Activated CD4-positive, alpha-beta memory T cell treated with anti-CD3 and anti-CD28 coated beads for 36 hours (primary cell): ENCODE measurements at regions of chr19 and their contacts with region 1.

Region 1: GRCh38 chr19:14136509-14137281 is at the start of gene ASF1B:
- DNase-seq: peak; percentile 99
- H3K4me3 Mint-ChIP-seq: peak within 1 kb of the TSS; percentile 81
- H3K27ac Mint-ChIP-seq: peak within 1 kb of the TSS; percentile 94
- H3K4me1 Mint-ChIP-seq: peaks cover 33% of the 10 kb centered on the region
- H3K27me3 Mint-ChIP-seq: no peaks in the 10 kb centered on the region
- total RNA-seq, gene ASF1B: 67.7 to 70.8 TPM

Region 2: GRCh38 chr19:14081325-14082093 is 55.2 kb before region 1 on chr19:
- CTCF ChIA-PET with region 1: interaction called, 18 read pairs
- POLR2A ChIA-PET with region 1: interaction called, 7 read pairs
- intact Hi-C with region 1: loop called (anchors 2 kb)
- DNase-seq: peak; percentile 99
- H3K4me3 Mint-ChIP-seq: peak overlapping the region; percentile 84
- H3K27ac Mint-ChIP-seq: peak overlapping the region; percentile 87
- H3K4me1 Mint-ChIP-seq: peaks cover 17% of the 10 kb centered on the region
- H3K27me3 Mint-ChIP-seq: peaks cover 2% of the 10 kb centered on the region

Region 3: DNA sequence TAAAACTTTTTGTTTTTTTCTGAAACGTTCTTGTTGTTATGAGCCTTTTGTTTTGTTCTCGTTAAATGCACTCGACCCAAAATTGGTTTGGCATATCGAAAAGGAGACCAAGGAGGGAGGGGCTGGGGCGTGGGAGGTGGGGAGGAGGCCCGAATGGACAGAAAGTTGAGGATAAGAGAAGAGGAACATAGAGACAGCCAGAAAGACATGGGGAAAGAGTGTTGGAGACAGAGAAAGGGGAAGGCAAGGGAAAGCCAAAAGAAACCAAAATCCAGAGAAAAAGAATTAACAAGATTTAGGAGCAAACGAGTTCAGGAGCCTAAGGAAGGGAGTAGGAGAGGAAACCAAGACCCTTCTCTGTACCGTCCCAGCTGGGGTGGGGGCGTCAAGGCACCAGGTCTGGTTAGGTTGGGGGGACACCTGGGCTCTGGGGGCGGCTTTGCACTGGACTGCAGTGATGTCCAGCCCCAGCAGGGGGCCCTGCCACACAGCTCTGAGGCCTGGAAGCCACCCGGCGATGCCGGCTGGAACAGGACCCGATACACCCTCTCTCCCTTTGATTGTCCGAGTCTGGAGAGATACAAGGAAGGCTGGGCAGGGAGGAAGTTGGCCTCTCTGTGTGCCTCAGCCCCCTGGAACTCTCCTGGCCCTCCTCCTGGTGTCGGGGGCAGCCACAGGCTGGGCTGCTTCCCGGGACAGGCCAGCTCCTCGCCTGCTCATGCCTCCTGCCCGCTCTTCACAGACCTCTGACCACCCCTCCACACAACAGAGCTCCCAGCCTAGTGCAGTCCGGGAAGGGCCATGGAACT is 11.3 kb after region 1 on chr19:
- CTCF ChIA-PET with region 1: interaction called, 30 read pairs
- POLR2A ChIA-PET with region 1: interaction called, 6 read pairs
- intact Hi-C with region 1: no loop called
- DNase-seq: peak; percentile 73
- H3K4me3 Mint-ChIP-seq: no peak overlapping the region
- H3K27ac Mint-ChIP-seq: peak overlapping the region; percentile 92
- H3K4me1 Mint-ChIP-seq: peaks cover 38% of the 10 kb centered on the region
- H3K27me3 Mint-ChIP-seq: no peaks in the 10 kb centered on the region

Region 4: DNA sequence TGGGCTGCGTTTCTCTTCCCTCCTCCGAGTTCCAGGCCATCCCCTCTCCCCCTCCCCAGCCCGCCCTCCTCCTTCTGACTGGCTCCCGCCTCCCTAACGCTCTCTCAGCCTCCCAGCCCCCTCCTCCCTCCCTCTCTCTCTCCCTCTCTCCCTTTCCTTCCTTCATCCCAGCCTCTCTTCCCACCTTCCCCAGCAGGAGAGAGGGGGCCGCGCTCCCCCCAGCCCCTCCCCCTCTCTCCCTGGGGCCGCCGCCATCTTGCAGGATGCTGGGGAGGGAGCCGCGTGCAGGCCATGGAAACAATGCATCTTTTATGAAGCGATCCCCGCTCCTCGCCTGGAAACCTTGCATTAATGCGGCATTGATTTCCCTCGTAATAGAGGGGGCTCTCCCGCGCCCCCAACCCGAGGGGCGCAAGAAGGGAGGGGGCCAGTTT is 111.9 kb after region 1 on chr19:
- CTCF ChIA-PET with region 1: no interaction called
- POLR2A ChIA-PET with region 1: no interaction called
- intact Hi-C with region 1: no loop called
- DNase-seq: peak; percentile 57
- H3K4me3 Mint-ChIP-seq: peak overlapping the region; percentile 50
- H3K27ac Mint-ChIP-seq: peak overlapping the region; percentile 66
- H3K4me1 Mint-ChIP-seq: peaks cover 4% of the 10 kb centered on the region
- H3K27me3 Mint-ChIP-seq: no peaks in the 10 kb centered on the region

Region 5: GRCh38 chr19:14354445-14354844 is 217.8 kb after region 1 on chr19:
- CTCF ChIA-PET with region 1: interaction called, 28 read pairs
- POLR2A ChIA-PET with region 1: no interaction called
- intact Hi-C with region 1: loop called (anchors 5 kb)
- DNase-seq: no peak
- H3K4me3 Mint-ChIP-seq: no peak overlapping the region
- H3K27ac Mint-ChIP-seq: peak overlapping the region; percentile 51
- H3K4me1 Mint-ChIP-seq: peaks cover 31% of the 10 kb centered on the region
- H3K27me3 Mint-ChIP-seq: no peaks in the 10 kb centered on the region

Region 6: DNA sequence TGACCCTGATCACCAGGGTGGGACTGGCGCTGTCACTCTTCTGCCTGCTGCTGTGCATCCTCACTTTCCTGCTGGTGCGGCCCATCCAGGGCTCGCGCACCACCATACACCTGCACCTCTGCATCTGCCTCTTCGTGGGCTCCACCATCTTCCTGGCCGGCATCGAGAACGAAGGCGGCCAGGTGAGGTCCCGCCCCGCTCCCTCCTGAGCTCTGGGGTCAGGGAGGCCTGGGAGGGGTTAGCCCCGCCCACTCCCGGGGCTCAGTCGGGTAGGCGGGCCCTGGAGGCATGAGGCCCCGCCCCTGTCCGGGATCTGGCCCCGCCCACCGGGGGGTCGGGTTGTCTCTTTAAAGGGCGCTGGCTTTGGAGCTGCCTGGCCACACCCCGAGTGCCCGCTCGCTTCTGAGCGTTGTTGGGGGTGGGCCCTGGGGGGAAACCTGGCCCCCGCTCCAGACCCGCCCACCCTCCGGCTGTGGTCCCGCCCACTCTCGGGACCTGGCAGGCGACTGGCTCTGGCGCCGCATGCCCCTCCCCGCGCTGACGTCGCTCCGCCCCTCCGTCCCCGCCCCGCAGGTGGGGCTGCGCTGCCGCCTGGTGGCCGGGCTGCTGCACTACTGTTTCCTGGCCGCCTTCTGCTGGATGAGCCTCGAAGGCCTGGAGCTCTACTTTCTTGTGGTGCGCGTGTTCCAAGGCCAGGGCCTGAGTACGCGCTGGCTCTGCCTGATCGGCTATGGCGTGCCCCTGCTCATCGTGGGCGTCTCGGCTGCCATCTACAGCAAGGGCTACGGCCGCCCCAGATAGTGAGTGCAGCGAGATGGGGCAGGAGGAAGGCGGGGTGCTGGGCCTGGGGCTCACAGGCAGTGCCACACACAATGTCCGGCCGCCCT is 269.3 kb after region 1 on chr19:
- CTCF ChIA-PET with region 1: interaction called, 31 read pairs
- POLR2A ChIA-PET with region 1: no interaction called
- intact Hi-C with region 1: no loop called
- DNase-seq: peak; percentile 93
- H3K4me3 Mint-ChIP-seq: no peak overlapping the region
- H3K27ac Mint-ChIP-seq: peak overlapping the region; percentile 76
- H3K4me1 Mint-ChIP-seq: peaks cover 25% of the 10 kb centered on the region
- H3K27me3 Mint-ChIP-seq: no peaks in the 10 kb centered on the region

Region 7: DNA sequence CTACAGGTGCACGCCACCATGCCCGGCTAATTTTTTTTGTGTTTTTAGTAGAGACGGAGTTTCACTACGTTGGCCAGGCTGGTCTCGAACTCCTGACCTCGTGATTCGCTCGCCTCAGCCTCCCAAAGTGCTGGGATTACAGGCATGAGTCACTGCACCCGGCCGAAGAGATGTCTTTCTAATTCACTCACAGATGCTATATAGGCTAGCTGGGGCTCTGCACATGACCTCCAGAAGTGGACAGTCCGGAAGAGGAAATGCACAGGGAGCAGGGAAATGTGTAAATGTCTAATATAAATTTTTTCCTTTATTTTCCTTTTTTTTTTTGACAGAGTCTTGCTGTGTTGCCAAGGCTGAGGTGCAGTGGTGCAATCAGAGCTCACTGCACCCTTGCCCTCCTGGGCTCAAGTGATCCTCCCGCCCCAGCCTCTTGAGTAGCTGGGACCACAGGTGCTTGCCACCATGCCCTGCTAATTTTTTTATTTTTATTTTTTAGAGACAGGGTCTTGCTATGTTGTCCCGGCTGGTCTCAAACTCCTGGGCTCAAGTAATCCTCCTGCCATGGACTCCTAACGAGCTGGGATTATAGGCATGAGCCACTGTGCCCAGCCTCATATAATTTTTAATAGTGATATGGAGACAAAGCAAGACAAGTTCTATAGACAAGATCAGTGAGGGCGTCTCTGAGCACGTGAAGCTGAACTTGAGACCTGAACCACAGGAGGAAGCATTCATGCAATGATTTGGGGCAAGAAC is 350.9 kb after region 1 on chr19:
- CTCF ChIA-PET with region 1: interaction called, 3 read pairs
- POLR2A ChIA-PET with region 1: interaction called, 3 read pairs
- intact Hi-C with region 1: loop called (anchors 2 kb)
- DNase-seq: no peak
- H3K4me3 Mint-ChIP-seq: no peak overlapping the region
- H3K27ac Mint-ChIP-seq: no peak overlapping the region
- H3K4me1 Mint-ChIP-seq: peaks cover 4% of the 10 kb centered on the region
- H3K27me3 Mint-ChIP-seq: no peaks in the 10 kb centered on the region